ENCODE measurements at regions of chr3 and their contacts with region 1.

Region 1: GRCh38 chr3:79032686-79033318 is 735.0 kb downstream of the ROBO1 start:
- DNase-seq: peak; percentile 35
- H3K4me3 ChIP-seq: no peak overlapping the region
- H3K27ac ChIP-seq: no peak overlapping the region
- H3K4me1 ChIP-seq: no peaks in the 10 kb centered on the region
- H3K27me3 ChIP-seq: no peaks in the 10 kb centered on the region
- CTCF ChIP-seq: peak; percentile 55 to 63

Region 2: DNA sequence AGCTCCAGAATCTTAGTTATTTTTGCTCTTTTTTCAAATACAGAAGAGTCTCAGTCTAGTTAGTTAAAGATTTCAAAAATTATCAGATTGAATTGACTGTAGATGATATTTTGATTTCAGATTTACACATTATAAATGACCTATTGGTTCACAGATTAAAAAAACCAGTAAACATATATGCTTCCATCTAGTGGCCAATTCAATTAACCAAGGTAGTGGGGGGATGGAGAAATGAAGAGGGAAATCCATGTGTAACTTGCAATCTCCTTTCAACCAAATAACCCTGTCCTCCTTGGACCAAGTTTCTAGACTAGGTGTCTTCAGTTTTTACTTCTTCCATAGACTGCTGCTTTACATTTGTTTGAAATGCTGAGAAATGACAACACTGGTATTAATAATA is 54.8 kb before region 1 on chr3:
- CTCF ChIA-PET with region 1: no interaction called
- dilution Hi-C with region 1: no loop called
- in situ Hi-C with region 1: no loop called
- intact Hi-C with region 1: loop called (anchors 1 kb)
- DNase-seq: peak; percentile 38
- H3K4me3 ChIP-seq: no peak overlapping the region
- H3K27ac ChIP-seq: no peak overlapping the region
- H3K4me1 ChIP-seq: peaks cover 3% of the 10 kb centered on the region
- H3K27me3 ChIP-seq: no peaks in the 10 kb centered on the region
- CTCF ChIP-seq: peak; percentile 48 to 65